GM18951 (cell line): ENCODE measurements at regions of chr19 and their contacts with region 1.

Region 1: DNA sequence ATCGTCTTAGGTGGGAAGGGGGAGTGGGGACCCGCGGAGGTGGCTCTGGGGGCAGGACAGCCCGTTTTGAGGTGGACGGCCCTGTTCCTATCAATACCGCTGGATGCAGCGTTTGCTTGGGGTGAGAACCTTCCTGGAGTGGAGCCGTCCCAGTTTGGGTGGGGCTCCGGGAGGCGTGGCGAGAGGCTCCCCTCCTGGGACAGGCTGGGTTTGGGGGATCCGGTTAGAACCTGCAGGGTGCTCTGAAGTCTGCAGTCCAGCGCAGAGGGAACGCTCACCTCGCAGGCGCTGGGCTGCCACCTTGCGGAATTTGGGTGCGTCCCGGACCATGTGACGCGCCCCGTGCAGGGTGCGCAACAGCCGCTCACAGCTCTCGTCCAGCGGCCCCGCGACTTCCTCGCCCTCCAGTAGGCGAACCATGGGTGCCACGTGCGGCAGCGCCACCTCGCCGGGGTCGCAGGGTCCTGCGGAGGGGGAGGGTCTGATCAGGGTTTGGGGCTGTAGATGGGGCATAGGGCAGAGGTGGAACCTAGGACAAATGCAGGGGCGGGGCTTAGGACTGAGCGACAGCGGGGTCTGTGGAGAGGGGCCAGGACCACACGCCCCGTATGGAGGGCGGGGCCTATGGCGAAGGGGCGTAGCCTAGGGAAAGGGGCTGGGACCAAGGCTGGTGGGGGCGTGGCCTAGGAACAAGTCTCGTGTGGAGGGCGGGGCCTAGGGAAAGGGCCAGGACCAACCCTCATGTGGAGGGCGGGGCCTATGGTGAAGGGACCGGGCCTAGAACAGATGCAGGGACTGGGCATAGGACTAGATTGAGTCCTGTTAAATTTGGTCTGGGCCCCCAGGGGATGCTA is 13.8 kb downstream of the SH2D3A start:
- POLR2A ChIP-seq: peak; percentile 53

Region 2: GRCh38 chr19:6849876-6850275 is 96.5 kb after region 1 on chr19:
- in situ Hi-C with region 1: loop called (anchors 5 kb)
- POLR2A ChIP-seq: no peak